ENCODE measurements at regions of chr1 and their contacts with region 1.

Region 1: GRCh38 chr1:28642847-28643635 is at the start of gene TAF12:
- DNase-seq: peak; percentile 92 to 95 (median 94)
- H3K4me3 ChIP-seq: peak within 1 kb of the TSS; percentile 63 to 96 (median 68)
- H3K4me3 Mint-ChIP-seq: peak within 1 kb of the TSS; percentile 100
- H3K27ac ChIP-seq: peak within 1 kb of the TSS; percentile 77 to 97
- H3K27ac Mint-ChIP-seq: peak within 1 kb of the TSS; percentile 98 to 99 (median 99)
- H3K4me1 ChIP-seq: peaks cover 40 to 44% of the 10 kb centered on the region in 2 donors
- H3K4me1 Mint-ChIP-seq: peaks cover 42% of the 10 kb centered on the region
- H3K27me3 ChIP-seq: no peaks in the 10 kb centered on the region
- H3K27me3 Mint-ChIP-seq: peaks cover 0 to 2% (median 0%) of the 10 kb centered on the region in 3 donors
- CTCF ChIP-seq: no peak
- polyA plus RNA-seq, gene TAF12: 36.7 to 53.7 (median 53.7) TPM

Region 2: GRCh38 chr1:28518000-28518744 is 124.9 kb before region 1 on chr1:
- intact Hi-C with region 1: no loop called
- DNase-seq: peak; percentile 80 to 87 (median 81)
- H3K4me3 ChIP-seq: peak overlapping the region; percentile 57 to 88 (median 60)
- H3K4me3 Mint-ChIP-seq: peak overlapping the region; percentile 88 to 89
- H3K27ac ChIP-seq: peak overlapping the region; percentile 16 to 59
- H3K27ac Mint-ChIP-seq: peak overlapping the region; percentile 78 to 94 (median 86)
- H3K4me1 ChIP-seq: peaks cover 15 to 17% of the 10 kb centered on the region in 2 donors
- H3K4me1 Mint-ChIP-seq: peaks cover 23% of the 10 kb centered on the region
- H3K27me3 ChIP-seq: no peaks in the 10 kb centered on the region
- H3K27me3 Mint-ChIP-seq: peaks cover 0 to 2% (median 2%) of the 10 kb centered on the region in 3 donors
- CTCF ChIP-seq: peak; percentile 100

Region 3: GRCh38 chr1:28565726-28566125 is 77.3 kb before region 1 on chr1:
- intact Hi-C with region 1: no loop called
- DNase-seq: no peak
- H3K4me3 ChIP-seq: no peak overlapping the region
- H3K4me3 Mint-ChIP-seq: no peak overlapping the region
- H3K27ac ChIP-seq: no peak overlapping the region
- H3K27ac Mint-ChIP-seq: no peak overlapping the region
- H3K4me1 ChIP-seq: no peaks in the 10 kb centered on the region
- H3K4me1 Mint-ChIP-seq: no peaks in the 10 kb centered on the region
- H3K27me3 ChIP-seq: no peaks in the 10 kb centered on the region
- H3K27me3 Mint-ChIP-seq: no peaks in the 10 kb centered on the region
- CTCF ChIP-seq: no peak

Region 4: DNA sequence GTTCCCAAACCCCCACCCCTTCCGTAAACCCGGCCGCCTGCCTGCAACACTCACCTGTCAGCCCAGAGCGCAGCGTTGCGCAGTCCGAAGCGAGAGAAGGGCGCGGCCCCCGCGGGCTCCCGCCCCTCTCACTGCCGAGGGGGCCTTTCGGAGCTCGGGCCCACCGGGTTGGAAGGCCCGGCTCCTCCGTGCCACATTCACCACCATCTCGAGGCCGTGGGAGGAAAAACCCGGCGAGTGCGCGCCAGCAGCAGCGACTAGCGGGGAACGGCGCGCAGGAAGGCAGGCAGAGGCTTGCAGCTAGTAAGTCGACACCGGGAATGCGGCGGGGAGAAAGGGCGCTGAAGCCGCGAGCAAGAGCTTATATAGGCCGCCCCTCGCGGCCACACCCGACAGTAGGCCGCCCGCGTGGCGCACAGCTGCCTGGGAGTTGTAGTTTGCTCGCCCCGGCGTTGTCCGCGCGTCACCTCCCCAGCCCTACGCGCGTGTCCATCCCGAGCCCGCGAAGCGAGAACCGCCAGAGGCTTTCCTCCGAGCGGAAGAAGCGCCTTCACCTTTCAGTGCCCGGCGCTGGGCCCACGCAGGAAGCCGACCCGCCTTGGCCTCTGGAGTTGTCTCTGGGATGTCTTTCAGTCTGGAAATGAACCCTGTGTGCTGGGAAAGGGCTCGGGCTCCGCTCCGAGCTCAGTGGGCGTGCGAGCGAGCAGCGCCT is 61.3 kb before region 1 on chr1:
- intact Hi-C with region 1: loop called in 1 of 2 experiments (anchors 5 kb)
- DNase-seq: peak; percentile 93 to 96 (median 95)
- H3K4me3 ChIP-seq: peak overlapping the region; percentile 65 to 88 (median 82)
- H3K4me3 Mint-ChIP-seq: peak overlapping the region; percentile 93 to 94
- H3K27ac ChIP-seq: peak overlapping the region; percentile 76 to 78
- H3K27ac Mint-ChIP-seq: peak overlapping the region; percentile 85 to 95 (median 93)
- H3K4me1 ChIP-seq: peaks cover 25 to 34% of the 10 kb centered on the region in 2 donors
- H3K4me1 Mint-ChIP-seq: peaks cover 48% of the 10 kb centered on the region
- H3K27me3 ChIP-seq: no peaks in the 10 kb centered on the region
- H3K27me3 Mint-ChIP-seq: peaks cover 0 to 3% (median 0%) of the 10 kb centered on the region in 3 donors
- CTCF ChIP-seq: no peak

Region 5: GRCh38 chr1:28736450-28737306 is 93.6 kb after region 1 on chr1 and contains the start of gene YTHDF2:
- intact Hi-C with region 1: loop called (anchors 2 to 5 kb)
- DNase-seq: peak; percentile 95 to 96 (median 95)
- H3K4me3 ChIP-seq: peak within 1 kb of the TSS; percentile 73 to 95 (median 78)
- H3K4me3 Mint-ChIP-seq: peak within 1 kb of the TSS; percentile 86 to 99
- H3K27ac ChIP-seq: peak within 1 kb of the TSS; percentile 74 to 91
- H3K27ac Mint-ChIP-seq: peak within 1 kb of the TSS; percentile 91 to 97 (median 95)
- H3K4me1 ChIP-seq: peaks cover 20 to 38% of the 10 kb centered on the region in 2 donors
- H3K4me1 Mint-ChIP-seq: peaks cover 27% of the 10 kb centered on the region
- H3K27me3 ChIP-seq: no peaks in the 10 kb centered on the region
- H3K27me3 Mint-ChIP-seq: peaks cover 0 to 2% (median 0%) of the 10 kb centered on the region in 3 donors
- CTCF ChIP-seq: peak; percentile 99
- polyA plus RNA-seq, gene YTHDF2: 20.7 to 81.6 (median 74.2) TPM

Region 6: GRCh38 chr1:29181413-29182225 is 538.6 kb after region 1 on chr1 and contains the start of gene SRSF4:
- intact Hi-C with region 1: loop called in 1 of 2 experiments (anchors 10 kb)
- DNase-seq: peak; percentile 98 to 99 (median 98)
- H3K4me3 ChIP-seq: peak within 1 kb of the TSS; percentile 80 to 91 (median 87)
- H3K4me3 Mint-ChIP-seq: peak within 1 kb of the TSS; percentile 93 to 95
- H3K27ac ChIP-seq: peak within 1 kb of the TSS; percentile 91 to 96
- H3K27ac Mint-ChIP-seq: peak within 1 kb of the TSS; percentile 91 to 97 (median 95)
- H3K4me1 ChIP-seq: peaks cover 35 to 52% of the 10 kb centered on the region in 2 donors
- H3K4me1 Mint-ChIP-seq: peaks cover 51% of the 10 kb centered on the region
- H3K27me3 ChIP-seq: no peaks in the 10 kb centered on the region
- H3K27me3 Mint-ChIP-seq: peaks cover 0 to 2% (median 0%) of the 10 kb centered on the region in 3 donors
- CTCF ChIP-seq: peak; percentile 76
- polyA plus RNA-seq, gene SRSF4: 38.4 to 66.8 (median 55.5) TPM